Right ventricle myocardium inferior (tissue), 1 donor: ENCODE measurements at regions of chr10 and their contacts with region 1.

Region 1: GRCh38 chr10:14499601-14499904 is 168.8 kb upstream of the FRMD4A start:
- DNase-seq: no peak
- ATAC-seq: no peak

Region 2: DNA sequence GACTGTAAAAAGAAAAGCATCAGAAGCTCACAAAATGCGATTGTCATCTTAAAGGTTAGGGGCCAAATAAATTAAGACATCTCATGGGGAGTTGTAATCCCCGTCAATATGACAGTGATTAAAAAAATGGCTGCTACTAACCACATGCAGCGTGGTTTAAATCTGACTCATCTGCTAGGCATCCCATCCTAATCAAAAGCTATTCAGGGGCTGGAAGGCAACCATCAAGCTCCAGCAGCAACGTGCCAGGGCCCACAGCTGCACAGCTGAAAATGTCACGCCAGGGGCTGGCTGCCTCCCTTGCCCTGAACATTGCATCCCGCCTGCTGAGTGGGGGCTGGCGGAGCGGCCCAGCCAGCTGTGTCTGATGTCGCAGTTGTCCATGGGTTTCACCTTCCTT is 102.5 kb before region 1 on chr10:
- intact Hi-C with region 1: no loop called
- DNase-seq: peak; percentile 83
- ATAC-seq: peak; percentile 96

Region 3: DNA sequence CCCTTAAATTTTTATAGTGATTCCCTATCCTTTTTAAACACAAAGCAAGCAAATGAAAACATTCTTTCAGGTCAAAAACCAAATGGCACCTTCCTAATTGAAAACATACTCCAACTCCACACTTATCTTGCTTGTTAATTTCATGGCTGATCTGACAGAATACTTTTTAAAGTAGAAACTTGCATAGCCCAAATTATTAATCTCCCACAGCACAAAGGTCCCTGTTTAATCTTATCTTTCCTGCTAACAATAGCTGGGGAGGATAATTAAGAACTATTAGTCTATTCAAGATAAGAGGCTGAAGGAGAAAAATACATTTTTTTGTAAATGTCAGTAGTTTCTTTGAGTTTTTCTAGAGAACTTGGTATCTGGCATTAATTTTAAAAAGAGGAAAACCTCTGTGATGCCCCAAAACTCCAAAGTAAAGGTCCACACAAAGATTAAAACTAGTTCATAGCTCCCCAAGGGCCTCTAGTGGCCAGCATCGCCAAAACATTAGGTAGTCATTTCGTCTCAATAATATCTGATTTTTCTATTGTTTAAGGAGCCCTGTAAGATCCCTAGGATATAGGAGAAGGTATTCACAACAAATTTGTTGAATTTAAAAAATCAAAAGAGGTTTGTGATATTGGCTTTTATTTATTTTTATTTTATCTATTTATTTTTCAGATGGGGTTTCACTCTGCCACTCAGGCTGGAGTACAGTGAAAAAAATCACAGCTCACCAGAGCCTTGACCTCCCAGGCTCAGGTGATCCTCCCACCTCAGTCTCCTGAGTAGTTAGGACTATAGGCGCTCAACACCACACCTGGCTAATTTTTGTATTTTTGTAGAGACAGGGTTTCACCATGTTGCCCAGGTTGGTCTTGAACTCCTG is 323.6 kb after region 1 on chr10:
- intact Hi-C with region 1: loop called (anchors 5 kb)
- DNase-seq: no peak
- ATAC-seq: no peak

Region 4: GRCh38 chr10:14971867-14972448 is 472.4 kb after region 1 on chr10:
- intact Hi-C with region 1: loop called (anchors 2 kb)
- DNase-seq: peak; percentile 70
- ATAC-seq: no peak

Region 5: GRCh38 chr10:15106352-15107013 is 606.9 kb after region 1 on chr10:
- intact Hi-C with region 1: loop called (anchors 5 kb)
- DNase-seq: peak; percentile 84
- ATAC-seq: peak; percentile 77